ENCODE measurements at regions of chr22 and their contacts with region 1.

Region 1: DNA sequence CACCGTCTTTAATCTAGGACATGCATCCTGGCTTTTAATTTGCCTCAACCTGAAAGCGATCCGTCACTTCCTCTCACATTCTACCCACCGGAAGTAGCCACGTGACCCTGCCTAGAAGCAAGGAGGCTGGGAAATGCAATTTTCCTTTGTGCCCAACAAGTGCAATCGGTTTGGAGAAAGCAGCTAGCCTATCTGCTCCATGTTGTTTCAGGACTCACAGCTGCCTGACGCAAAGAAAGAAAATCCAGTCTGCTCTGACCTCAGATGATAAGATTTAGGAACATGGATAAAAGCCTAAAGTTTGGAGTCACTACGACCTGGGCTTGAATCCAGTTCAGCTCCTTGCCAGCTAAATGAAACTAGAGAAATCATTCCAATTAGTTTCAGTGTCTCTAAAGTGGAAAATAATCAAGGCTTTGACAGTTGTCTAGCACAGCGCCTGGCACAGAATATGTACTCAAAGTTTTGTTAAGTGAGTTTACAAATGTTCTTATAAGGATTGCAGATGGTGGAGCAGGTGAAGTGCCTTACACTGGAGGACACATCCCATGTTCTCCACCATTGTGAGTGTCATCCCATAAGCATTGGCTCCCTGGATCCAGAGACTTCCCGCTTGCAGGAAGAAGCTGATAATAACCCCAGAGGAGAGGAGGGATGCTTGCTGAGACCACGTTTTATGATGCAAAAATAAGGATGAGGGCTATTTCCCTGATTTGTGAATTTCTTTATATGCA is 553.7 kb downstream of the MN1 start:
- DNase-seq: no peak
- H3K4me3 ChIP-seq: no peak overlapping the region
- H3K27ac ChIP-seq: peak overlapping the region in 3 of 4 donors; percentile 25 to 48 (median 45)
- H3K4me1 ChIP-seq: peaks cover 0 to 6% (median 4%) of the 10 kb centered on the region in 4 donors
- H3K27me3 ChIP-seq: no peaks in the 10 kb centered on the region
- CTCF ChIP-seq: no peak
- EP300 ChIP-seq: no peak
- POLR2A ChIP-seq: no peak

Region 2: DNA sequence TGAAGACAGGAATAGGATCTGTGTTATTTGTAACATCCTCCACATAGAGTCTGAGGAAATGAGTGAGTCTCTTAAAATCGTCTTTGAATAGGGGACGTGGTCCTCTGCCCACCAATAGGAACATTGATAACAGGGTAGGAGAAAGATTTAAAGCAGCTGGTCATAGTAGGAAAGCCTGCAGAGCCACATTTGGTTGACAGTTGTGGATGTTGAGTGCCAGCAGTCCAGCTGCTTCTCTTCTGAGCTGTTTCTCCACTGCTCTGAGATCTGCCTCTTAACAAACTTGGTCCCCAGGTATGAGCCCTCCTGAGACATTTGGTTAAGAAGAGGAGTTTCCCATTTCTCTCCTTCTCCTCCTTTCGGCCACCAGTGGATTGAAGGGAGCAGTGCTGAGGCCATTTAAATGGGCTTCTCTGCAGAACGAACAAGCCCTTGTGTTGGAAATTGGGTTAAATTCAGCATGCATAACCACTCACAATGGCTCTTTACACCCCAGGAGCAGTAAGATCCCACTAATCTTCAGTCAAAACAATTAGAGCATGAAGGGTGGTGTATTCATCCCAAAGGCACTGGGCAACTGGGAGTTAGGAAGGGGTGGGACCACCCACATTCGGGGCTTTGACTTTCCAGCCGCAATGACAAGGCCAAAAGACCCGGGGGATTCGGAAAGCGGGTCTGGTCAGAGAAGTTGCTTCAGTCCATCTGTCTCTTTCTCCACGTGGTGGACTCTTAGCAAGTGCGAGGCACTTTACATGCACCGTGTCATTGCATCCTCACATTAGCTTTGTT is 558.2 kb before region 1 on chr22:
- in situ Hi-C with region 1: no loop called
- intact Hi-C with region 1: loop called (anchors 5 kb)
- DNase-seq: no peak
- H3K4me3 ChIP-seq: no peak overlapping the region
- H3K27ac ChIP-seq: no peak overlapping the region
- H3K4me1 ChIP-seq: no peaks in the 10 kb centered on the region
- H3K27me3 ChIP-seq: no peaks in the 10 kb centered on the region
- CTCF ChIP-seq: no peak
- EP300 ChIP-seq: no peak
- POLR2A ChIP-seq: no peak

Region 3: DNA sequence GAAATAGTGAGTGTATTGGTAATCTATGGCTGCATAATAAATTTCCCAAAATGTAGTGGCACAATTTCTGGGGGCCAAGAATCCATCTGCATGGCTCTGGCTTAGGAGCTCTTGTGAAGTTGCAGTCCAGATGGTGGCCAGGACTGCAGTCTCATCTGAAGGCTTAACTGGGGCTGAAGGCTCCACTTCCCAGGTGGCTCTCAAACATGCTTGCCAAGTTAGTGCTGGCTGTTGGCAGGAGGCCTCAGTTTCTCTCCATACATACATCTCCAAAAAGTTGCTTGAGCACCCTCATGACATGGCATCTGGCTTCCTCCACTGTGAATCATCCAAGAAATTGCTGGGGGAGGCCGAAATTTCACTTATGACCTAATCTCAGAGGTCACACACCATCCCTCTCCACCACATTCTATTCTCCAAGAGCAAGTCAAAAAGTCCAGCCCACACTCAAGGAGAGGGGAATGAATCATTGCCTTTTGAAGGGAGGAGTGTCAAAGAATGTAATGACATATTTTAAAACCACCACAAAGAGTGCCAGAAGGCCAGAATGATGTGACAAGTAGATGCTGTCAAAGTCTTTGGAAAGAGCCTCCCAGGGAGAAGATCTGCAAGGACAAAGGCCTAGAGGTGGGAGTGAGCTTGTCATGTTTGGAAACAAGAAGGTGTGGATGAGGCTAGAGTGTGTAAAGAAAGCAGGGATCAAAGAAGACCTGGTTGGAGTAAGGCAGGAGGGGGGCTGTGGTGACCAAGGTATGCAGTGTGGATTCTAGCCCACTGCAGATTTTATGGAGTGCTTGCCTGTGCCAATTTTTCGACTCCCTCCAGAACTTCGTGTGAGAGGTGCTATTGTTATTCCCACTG is 24.3 kb before region 1 on chr22:
- in situ Hi-C with region 1: no loop called
- intact Hi-C with region 1: no loop called
- DNase-seq: no peak
- H3K4me3 ChIP-seq: no peak overlapping the region
- H3K27ac ChIP-seq: peak overlapping the region; percentile 9 to 34 (median 29)
- H3K4me1 ChIP-seq: no peaks in the 10 kb centered on the region
- H3K27me3 ChIP-seq: no peaks in the 10 kb centered on the region
- CTCF ChIP-seq: no peak
- EP300 ChIP-seq: no peak
- POLR2A ChIP-seq: no peak

Measured in transverse colon (tissue), 4 donors.